Ovary (tissue), 10 donors: ENCODE measurements at regions of chr6 and their contacts with region 1.

Region 1: DNA sequence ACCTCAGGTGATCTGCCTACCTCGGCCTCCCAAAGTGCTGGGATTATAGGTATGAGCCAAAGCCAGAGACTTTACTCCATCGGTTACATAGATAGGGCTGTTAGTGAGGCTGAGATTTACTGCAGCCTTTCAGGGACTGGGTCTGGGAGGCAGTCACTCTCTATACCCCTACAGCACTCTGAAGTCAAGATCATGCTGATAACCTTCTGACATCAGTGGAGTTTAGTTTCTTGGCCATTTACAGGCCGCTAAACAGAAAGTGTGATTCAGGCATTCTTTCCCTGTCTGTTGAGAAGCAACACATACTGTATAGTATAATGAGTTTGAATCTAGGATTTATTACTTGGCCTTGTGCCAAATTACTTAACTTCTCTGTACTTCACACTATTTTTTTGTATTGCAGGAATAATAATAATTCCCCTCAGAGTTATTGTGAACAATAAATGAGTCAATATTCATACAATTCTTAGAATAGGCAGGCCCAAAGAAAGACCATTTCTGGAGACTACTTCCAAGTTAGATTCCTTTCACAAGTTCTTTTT is 4.0 kb downstream of the ZNF391 start:
- DNase-seq: no peak
- H3K4me3 ChIP-seq: no peak overlapping the region
- H3K27ac ChIP-seq: no peak overlapping the region
- H3K4me1 ChIP-seq: peaks cover 1% of the 10 kb centered on the region
- H3K27me3 ChIP-seq: no peaks in the 10 kb centered on the region
- CTCF ChIP-seq: no peak
- EP300 ChIP-seq: no peak
- POLR2A ChIP-seq: no peak

Region 2: GRCh38 chr6:27157459-27158315 is 234.9 kb before region 1 on chr6:
- intact Hi-C with region 1: no loop called
- DNase-seq: peak; percentile 62 to 85 (median 77)
- H3K4me3 ChIP-seq: peak overlapping the region; percentile 36
- H3K27ac ChIP-seq: peak overlapping the region in 1 of 2 donors; percentile 47
- H3K4me1 ChIP-seq: no peaks in the 10 kb centered on the region
- H3K27me3 ChIP-seq: no peaks in the 10 kb centered on the region
- CTCF ChIP-seq: peak in 2 of 3 donors; percentile 52 to 53
- EP300 ChIP-seq: no peak
- POLR2A ChIP-seq: no peak

Region 3: GRCh38 chr6:27460701-27461100 is 68.1 kb after region 1 on chr6:
- intact Hi-C with region 1: loop called in 1 of 4 experiments (anchors 5 kb)
- DNase-seq: no peak
- H3K4me3 ChIP-seq: no peak overlapping the region
- H3K27ac ChIP-seq: no peak overlapping the region
- H3K4me1 ChIP-seq: no peaks in the 10 kb centered on the region
- H3K27me3 ChIP-seq: no peaks in the 10 kb centered on the region
- CTCF ChIP-seq: no peak
- EP300 ChIP-seq: no peak
- POLR2A ChIP-seq: no peak

Region 4: GRCh38 chr6:27617700-27618689 is 225.4 kb after region 1 on chr6:
- intact Hi-C with region 1: no loop called
- DNase-seq: no peak
- H3K4me3 ChIP-seq: peak overlapping the region; percentile 22
- H3K27ac ChIP-seq: no peak overlapping the region
- H3K4me1 ChIP-seq: peaks cover 6% of the 10 kb centered on the region
- H3K27me3 ChIP-seq: no peaks in the 10 kb centered on the region
- CTCF ChIP-seq: no peak
- EP300 ChIP-seq: no peak
- POLR2A ChIP-seq: no peak

Region 5: GRCh38 chr6:27650620-27651370 is 258.2 kb after region 1 on chr6:
- intact Hi-C with region 1: no loop called
- DNase-seq: no peak
- H3K4me3 ChIP-seq: no peak overlapping the region
- H3K27ac ChIP-seq: no peak overlapping the region
- H3K4me1 ChIP-seq: no peaks in the 10 kb centered on the region
- H3K27me3 ChIP-seq: no peaks in the 10 kb centered on the region
- CTCF ChIP-seq: no peak
- EP300 ChIP-seq: no peak
- POLR2A ChIP-seq: no peak

Region 6: GRCh38 chr6:27662769-27663168 is 270.2 kb after region 1 on chr6:
- intact Hi-C with region 1: no loop called
- DNase-seq: no peak
- H3K4me3 ChIP-seq: no peak overlapping the region
- H3K27ac ChIP-seq: no peak overlapping the region
- H3K4me1 ChIP-seq: peaks cover 2% of the 10 kb centered on the region
- H3K27me3 ChIP-seq: no peaks in the 10 kb centered on the region
- CTCF ChIP-seq: no peak
- EP300 ChIP-seq: no peak
- POLR2A ChIP-seq: no peak